Mammary epithelial cell (primary cell): ENCODE measurements at regions of chr10 and their contacts with region 1.

Region 1: DNA sequence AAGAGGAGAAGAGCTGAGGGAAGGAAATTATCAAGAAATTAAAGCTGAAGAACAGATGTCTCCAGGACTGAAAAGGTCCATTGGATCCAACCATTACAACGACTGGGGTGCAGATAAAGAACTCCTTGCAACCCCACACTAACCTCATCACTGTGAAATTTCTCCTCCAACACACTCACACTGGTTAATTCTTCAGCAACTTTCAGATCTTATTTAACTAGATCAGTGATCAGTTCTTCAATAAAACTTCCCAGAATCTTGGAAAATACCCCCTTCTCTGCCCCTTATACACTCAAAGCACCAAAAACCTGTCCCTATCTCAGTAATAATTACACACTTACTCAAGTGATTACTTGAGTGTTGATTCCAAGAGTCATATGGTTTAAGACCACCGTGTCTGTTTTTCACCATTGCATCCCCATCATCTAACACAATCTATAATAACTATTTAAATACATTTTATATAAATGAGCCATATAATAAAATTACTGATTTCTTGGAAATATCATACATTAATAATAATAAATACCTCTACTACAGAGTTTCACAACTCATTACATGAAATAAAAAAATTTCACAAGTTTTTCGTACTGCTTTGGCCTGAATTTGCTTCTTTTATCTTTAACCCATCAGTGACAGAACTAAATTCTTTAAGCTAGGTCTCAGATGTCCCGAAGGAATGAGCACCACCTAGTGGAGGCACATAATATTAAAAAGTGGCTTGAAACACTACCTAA is 123.7 kb downstream of the MPP7 start:
- DNase-seq: peak; percentile 26
- H3K4me3 ChIP-seq: no peak overlapping the region
- H3K27ac ChIP-seq: no peak overlapping the region
- H3K4me1 ChIP-seq: peaks cover 5% of the 10 kb centered on the region
- H3K27me3 ChIP-seq: no peaks in the 10 kb centered on the region
- CTCF ChIP-seq: peak; percentile 57 to 68

Region 2: DNA sequence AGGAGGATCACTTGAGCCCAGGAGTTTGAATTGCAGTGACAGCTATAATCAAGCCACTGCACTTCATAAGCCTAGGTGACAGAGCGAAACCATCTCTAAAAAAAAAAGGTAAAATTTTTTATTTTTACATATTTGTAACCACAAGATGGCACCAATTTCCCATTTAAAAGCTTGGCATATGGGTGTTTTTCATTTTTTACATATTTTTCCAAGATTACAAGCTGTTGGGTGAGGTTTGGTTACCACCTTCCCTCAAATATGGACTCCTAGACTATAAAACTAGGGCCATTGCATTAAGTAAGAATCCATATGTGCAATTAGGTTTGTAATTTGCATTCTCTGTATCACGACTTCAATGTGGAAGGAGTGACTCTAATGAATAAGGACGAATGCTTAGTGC is 809.3 kb before region 1 on chr10:
- CTCF ChIA-PET with region 1: no interaction called
- dilution Hi-C with region 1: no loop called
- in situ Hi-C with region 1: no loop called
- intact Hi-C with region 1: loop called (anchors 5 kb)
- DNase-seq: no peak
- H3K4me3 ChIP-seq: no peak overlapping the region
- H3K27ac ChIP-seq: no peak overlapping the region
- H3K4me1 ChIP-seq: no peaks in the 10 kb centered on the region
- H3K27me3 ChIP-seq: no peaks in the 10 kb centered on the region
- CTCF ChIP-seq: peak; percentile 23 to 36

Region 3: DNA sequence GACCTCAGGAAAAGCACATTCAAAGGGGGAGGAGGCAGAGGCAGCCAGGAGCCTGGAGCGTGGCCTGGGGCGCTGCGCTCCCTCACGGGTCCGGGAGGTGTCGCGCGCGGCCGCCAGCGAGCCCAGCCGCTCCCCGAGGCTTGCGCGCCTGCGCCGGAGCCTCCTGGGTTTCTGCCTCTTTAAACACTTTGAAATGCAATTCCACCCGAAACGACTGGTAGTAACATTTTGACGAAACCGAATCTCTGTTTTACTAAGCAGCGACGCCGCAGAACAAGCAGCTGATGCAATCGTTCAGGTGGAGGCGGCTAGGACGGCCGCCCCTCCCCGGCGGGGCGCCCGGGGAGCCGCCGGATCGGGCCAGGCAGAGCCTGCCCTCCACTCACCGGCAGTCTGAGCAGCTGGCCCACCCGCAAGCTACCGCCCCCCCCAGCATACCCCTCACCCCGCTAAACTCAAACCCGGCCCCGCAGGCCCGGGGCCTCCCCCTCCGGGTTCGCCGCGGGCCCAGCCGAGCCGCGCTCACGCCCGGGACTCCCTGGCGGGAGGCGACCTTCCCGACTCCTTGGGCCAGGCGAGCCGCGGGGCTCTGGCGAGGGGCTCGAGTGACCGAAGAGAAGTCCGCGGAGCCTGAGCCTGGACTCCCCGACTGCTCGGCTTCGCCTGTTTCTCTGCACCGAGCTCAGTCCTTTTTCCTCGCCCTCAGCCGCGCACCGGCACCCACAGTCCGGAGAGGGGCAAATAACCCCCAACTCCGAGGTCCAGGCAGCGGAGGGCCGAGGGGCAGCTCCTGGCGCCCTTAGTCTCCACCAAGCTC is 436.8 kb before region 1 on chr10:
- CTCF ChIA-PET with region 1: interaction called, 3 read pairs
- dilution Hi-C with region 1: no loop called
- in situ Hi-C with region 1: no loop called
- intact Hi-C with region 1: loop called (anchors 2 kb)
- DNase-seq: peak; percentile 63
- H3K4me3 ChIP-seq: peak overlapping the region; percentile 41 to 47 (median 43)
- H3K27ac ChIP-seq: no peak overlapping the region
- H3K4me1 ChIP-seq: peaks cover 26% of the 10 kb centered on the region
- H3K27me3 ChIP-seq: peaks cover 48% of the 10 kb centered on the region
- CTCF ChIP-seq: peak; percentile 35 to 60

Region 4: GRCh38 chr10:27783660-27784059 is 395.5 kb before region 1 on chr10:
- CTCF ChIA-PET with region 1: interaction called, 3 read pairs
- dilution Hi-C with region 1: no loop called
- in situ Hi-C with region 1: no loop called
- intact Hi-C with region 1: loop called (anchors 1 kb)
- DNase-seq: peak; percentile 55
- H3K4me3 ChIP-seq: no peak overlapping the region
- H3K27ac ChIP-seq: no peak overlapping the region
- H3K4me1 ChIP-seq: no peaks in the 10 kb centered on the region
- H3K27me3 ChIP-seq: peaks cover 3% of the 10 kb centered on the region
- CTCF ChIP-seq: peak; percentile 29 to 52

Region 5: GRCh38 chr10:27998254-27999004 is 180.7 kb before region 1 on chr10:
- CTCF ChIA-PET with region 1: no interaction called
- dilution Hi-C with region 1: no loop called
- in situ Hi-C with region 1: no loop called
- intact Hi-C with region 1: loop called (anchors 2 kb)
- DNase-seq: peak; percentile 3
- H3K4me3 ChIP-seq: peak overlapping the region; percentile 16 to 51 (median 51)
- H3K27ac ChIP-seq: no peak overlapping the region
- H3K4me1 ChIP-seq: peaks cover 8% of the 10 kb centered on the region
- H3K27me3 ChIP-seq: peaks cover 9% of the 10 kb centered on the region
- CTCF ChIP-seq: no peak

Region 6: GRCh38 chr10:28020080-28020860 is 158.9 kb before region 1 on chr10:
- CTCF ChIA-PET with region 1: no interaction called
- dilution Hi-C with region 1: no loop called
- in situ Hi-C with region 1: no loop called
- intact Hi-C with region 1: no loop called
- DNase-seq: no peak
- H3K4me3 ChIP-seq: no peak overlapping the region
- H3K27ac ChIP-seq: no peak overlapping the region
- H3K4me1 ChIP-seq: no peaks in the 10 kb centered on the region
- H3K27me3 ChIP-seq: peaks cover 2% of the 10 kb centered on the region
- CTCF ChIP-seq: no peak

Region 7: GRCh38 chr10:28312572-28312971 is 133.4 kb after region 1 on chr10:
- CTCF ChIA-PET with region 1: no interaction called
- dilution Hi-C with region 1: no loop called
- in situ Hi-C with region 1: no loop called
- intact Hi-C with region 1: no loop called
- DNase-seq: no peak
- H3K4me3 ChIP-seq: no peak overlapping the region
- H3K27ac ChIP-seq: no peak overlapping the region
- H3K4me1 ChIP-seq: no peaks in the 10 kb centered on the region
- H3K27me3 ChIP-seq: no peaks in the 10 kb centered on the region
- CTCF ChIP-seq: no peak

Region 8: GRCh38 chr10:28381903-28382347 is 202.8 kb after region 1 on chr10:
- CTCF ChIA-PET with region 1: no interaction called
- dilution Hi-C with region 1: no loop called
- in situ Hi-C with region 1: no loop called
- intact Hi-C with region 1: loop called (anchors 5 kb)
- DNase-seq: peak; percentile 83
- H3K4me3 ChIP-seq: no peak overlapping the region
- H3K27ac ChIP-seq: no peak overlapping the region
- H3K4me1 ChIP-seq: peaks cover under 1% of the 10 kb centered on the region
- H3K27me3 ChIP-seq: no peaks in the 10 kb centered on the region
- CTCF ChIP-seq: peak; percentile 90 to 93